ENCODE measurements at regions of chr22 and their contacts with region 1.

Region 1: DNA sequence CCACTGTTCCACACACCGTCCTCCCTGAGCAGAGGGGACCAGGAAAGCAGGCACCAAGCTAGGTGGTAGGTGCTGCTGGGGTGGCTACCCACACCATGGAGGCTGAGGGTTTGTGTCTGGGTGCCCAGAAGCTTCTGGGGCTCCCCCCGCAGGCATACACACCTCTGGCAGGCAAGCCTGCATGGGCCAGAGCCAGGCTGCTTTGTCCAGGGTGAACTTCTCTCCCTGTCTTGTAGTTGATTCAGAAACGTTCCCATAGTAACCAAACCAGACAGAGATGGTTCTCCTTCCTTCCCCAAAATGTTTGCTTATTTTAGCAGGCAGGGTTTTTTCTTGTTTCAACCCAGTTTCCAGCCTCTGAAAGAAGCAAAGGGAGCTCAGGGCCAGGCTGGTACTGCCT is 40.9 kb upstream of the SUSD2 start:
- DNase-seq: no peak
- H3K4me3 Mint-ChIP-seq: no peak overlapping the region
- H3K27ac Mint-ChIP-seq: no peak overlapping the region
- H3K4me1 Mint-ChIP-seq: peaks cover 53% of the 10 kb centered on the region
- H3K27me3 Mint-ChIP-seq: no peaks in the 10 kb centered on the region

Region 2: GRCh38 chr22:24095826-24096757 is 44.3 kb before region 1 on chr22:
- CTCF ChIA-PET with region 1: no interaction called
- intact Hi-C with region 1: no loop called
- DNase-seq: no peak
- H3K4me3 Mint-ChIP-seq: no peak overlapping the region
- H3K27ac Mint-ChIP-seq: no peak overlapping the region
- H3K4me1 Mint-ChIP-seq: no peaks in the 10 kb centered on the region
- H3K27me3 Mint-ChIP-seq: no peaks in the 10 kb centered on the region

Region 3: GRCh38 chr22:24106385-24107381 is 33.7 kb before region 1 on chr22:
- CTCF ChIA-PET with region 1: no interaction called
- intact Hi-C with region 1: loop called (anchors 2 kb)
- DNase-seq: peak; percentile 27
- H3K4me3 Mint-ChIP-seq: no peak overlapping the region
- H3K27ac Mint-ChIP-seq: peak overlapping the region; percentile 60
- H3K4me1 Mint-ChIP-seq: peaks cover 28% of the 10 kb centered on the region
- H3K27me3 Mint-ChIP-seq: no peaks in the 10 kb centered on the region

Region 4: DNA sequence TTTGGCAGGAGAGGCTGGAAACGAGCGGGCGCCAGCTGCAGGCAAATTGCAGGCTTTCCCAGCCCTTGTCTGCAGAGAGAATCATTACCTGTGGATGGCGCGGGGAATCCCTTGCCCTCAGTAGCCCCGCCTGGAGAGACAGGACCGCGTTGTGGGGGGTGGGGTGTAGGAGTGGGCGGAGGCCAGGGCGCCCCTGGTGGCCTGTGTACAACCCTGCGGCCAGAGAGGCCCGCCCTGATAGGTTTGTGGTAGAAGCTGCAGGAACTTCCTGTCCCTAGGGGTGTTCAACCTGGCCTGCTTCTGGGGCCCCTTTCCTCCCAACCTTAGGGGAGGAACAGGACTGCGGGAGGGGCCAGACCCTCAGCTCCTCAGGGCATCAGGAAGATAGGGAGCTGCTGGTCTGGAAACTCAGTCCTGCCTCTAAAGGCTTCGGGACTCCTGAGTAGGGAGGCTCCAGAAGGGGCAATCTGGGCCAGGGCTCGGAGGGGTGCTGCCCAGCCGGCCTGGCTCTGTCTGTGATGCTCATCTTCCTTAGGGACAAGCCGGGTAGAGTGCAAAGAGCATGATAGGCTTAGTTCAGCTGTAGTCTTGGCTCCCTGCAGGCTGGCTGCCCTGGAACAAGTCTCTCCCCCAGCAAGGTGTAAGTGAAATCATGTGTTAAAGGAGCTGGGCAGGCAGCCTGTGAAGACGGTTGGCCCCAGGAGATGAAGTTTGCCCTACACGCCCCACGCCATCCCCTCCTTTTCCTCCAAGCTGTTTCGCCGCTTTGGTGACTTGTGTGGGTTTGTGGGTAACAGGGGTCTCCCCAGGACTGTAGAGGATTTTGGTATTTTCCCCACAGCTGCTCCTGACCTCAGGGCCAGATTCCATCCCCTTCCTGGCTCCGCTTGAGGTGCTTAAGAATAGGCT is 16.8 kb after region 1 on chr22:
- CTCF ChIA-PET with region 1: interaction called, 12 read pairs
- intact Hi-C with region 1: no loop called
- DNase-seq: peak; percentile 92
- H3K4me3 Mint-ChIP-seq: peak overlapping the region; percentile 73
- H3K27ac Mint-ChIP-seq: peak overlapping the region; percentile 26
- H3K4me1 Mint-ChIP-seq: peaks cover 72% of the 10 kb centered on the region
- H3K27me3 Mint-ChIP-seq: no peaks in the 10 kb centered on the region

Measured in activated naive CD4-positive, alpha-beta T cell treated with anti-CD3 and anti-CD28 coated beads for 36 hours (primary cell).